CD8-positive, alpha-beta T cell (primary cell): ENCODE measurements at regions of chr13 and their contacts with region 1.

Region 1: DNA sequence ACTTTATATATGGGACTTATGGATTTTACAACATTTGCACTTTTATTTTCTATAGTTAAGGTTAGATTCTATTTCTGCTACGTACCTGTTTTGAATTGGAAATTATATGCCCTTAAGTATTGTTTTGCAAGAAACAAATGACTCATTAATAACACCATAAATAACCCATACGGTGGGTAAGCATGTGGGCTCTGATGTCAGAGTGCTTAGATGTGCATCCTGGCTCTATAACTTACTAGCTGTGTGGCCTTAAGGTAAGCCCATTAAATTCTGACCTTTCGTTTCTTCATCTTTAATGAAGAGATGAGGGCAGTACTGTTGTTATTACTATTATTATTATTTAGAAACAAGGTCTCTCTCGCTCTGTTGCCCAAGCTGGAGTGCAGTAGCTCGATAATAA is 52.9 kb upstream of the UBAC2 start:
- DNase-seq: no peak
- ATAC-seq: no peak
- H3K4me3 ChIP-seq: no peak overlapping the region
- H3K4me3 Mint-ChIP-seq: no peak overlapping the region
- H3K27ac ChIP-seq: no peak overlapping the region
- H3K27ac Mint-ChIP-seq: no peak overlapping the region
- H3K4me1 ChIP-seq: no peaks in the 10 kb centered on the region
- H3K4me1 Mint-ChIP-seq: no peaks in the 10 kb centered on the region
- H3K27me3 ChIP-seq: no peaks in the 10 kb centered on the region
- H3K27me3 Mint-ChIP-seq: no peaks in the 10 kb centered on the region
- CTCF ChIP-seq: no peak

Region 2: GRCh38 chr13:99022941-99023340 is 124.8 kb before region 1 on chr13:
- CTCF ChIA-PET with region 1: no interaction called
- POLR2A ChIA-PET with region 1: no interaction called
- intact Hi-C with region 1: loop called in 1 of 2 experiments (anchors 5 kb)
- DNase-seq: no peak
- ATAC-seq: no peak
- H3K4me3 ChIP-seq: no peak overlapping the region
- H3K4me3 Mint-ChIP-seq: no peak overlapping the region
- H3K27ac ChIP-seq: no peak overlapping the region
- H3K27ac Mint-ChIP-seq: no peak overlapping the region
- H3K4me1 ChIP-seq: peaks cover 5% of the 10 kb centered on the region
- H3K4me1 Mint-ChIP-seq: peaks cover 68% of the 10 kb centered on the region
- H3K27me3 ChIP-seq: no peaks in the 10 kb centered on the region
- H3K27me3 Mint-ChIP-seq: no peaks in the 10 kb centered on the region
- CTCF ChIP-seq: no peak

Region 3: DNA sequence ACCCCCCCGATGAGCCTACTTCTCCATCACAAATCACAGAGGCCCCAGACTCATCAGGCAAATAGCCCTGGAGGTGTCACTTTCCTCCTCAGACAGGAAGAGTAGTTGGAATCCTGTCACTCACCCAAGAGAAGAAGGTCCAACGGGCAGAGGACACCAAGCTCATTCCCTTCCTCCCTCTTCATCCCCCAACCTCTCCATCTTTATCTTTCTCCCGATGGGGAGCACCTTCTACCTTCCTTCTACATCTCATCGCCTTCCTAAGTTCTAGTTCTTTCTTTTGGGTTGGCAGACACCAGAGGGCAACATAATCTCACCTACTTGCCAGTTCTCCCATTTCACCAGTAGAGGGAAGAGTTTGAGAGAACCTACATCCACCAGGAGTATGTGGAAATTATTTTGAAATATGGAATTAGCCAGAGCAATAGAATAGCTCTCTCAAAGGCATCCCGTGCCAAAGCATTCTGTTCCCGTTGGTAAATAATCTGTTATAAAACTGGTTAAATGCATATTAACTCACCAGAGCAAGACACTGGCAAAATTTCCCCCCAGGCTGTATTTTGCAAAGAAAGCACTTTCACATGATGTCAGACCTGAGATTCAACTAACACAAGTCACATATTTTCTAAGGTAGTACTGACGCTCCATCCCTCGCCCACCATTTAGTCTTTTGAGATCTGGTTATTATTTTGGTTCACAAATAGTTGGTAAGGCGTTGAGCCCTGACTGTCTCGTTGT is 768.8 kb after region 1 on chr13:
- CTCF ChIA-PET with region 1: no interaction called
- POLR2A ChIA-PET with region 1: no interaction called
- intact Hi-C with region 1: no loop called
- DNase-seq: peak in 2 of 9 experiments; percentile 60 to 73
- ATAC-seq: peak; percentile 86
- H3K4me3 ChIP-seq: no peak overlapping the region
- H3K4me3 Mint-ChIP-seq: no peak overlapping the region
- H3K27ac ChIP-seq: no peak overlapping the region
- H3K27ac Mint-ChIP-seq: no peak overlapping the region
- H3K4me1 ChIP-seq: no peaks in the 10 kb centered on the region
- H3K4me1 Mint-ChIP-seq: peaks cover 11% of the 10 kb centered on the region
- H3K27me3 ChIP-seq: no peaks in the 10 kb centered on the region
- H3K27me3 Mint-ChIP-seq: peaks cover 17% of the 10 kb centered on the region
- CTCF ChIP-seq: peak; percentile 83